Mammary epithelial cell (primary cell): ENCODE measurements at regions of chr7 and their contacts with region 1.

Region 1: DNA sequence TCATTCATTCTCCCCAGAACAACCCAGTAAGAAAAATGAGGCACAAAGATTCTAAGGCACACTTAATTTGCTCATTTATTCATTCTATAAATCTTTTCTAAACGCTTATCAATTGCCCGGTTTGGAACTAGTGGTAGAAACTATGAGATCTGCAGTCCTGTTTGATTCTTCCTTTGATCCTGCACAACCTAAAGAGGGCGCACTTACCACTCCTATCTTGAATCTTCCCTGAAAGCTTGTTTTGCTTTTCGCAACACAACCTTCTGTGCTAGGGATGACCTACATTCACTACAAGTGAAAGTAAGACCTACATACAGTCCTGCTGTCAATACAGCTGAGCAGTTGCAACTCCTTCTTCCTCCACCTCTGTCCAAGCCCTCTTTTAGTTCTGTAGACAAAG is 12.6 kb upstream of the ARL4A start:
- DNase-seq: peak; percentile 30
- H3K4me3 ChIP-seq: no peak overlapping the region
- H3K27ac ChIP-seq: no peak overlapping the region
- H3K4me1 ChIP-seq: no peaks in the 10 kb centered on the region
- H3K27me3 ChIP-seq: no peaks in the 10 kb centered on the region
- CTCF ChIP-seq: peak; percentile 54 to 63

Region 2: DNA sequence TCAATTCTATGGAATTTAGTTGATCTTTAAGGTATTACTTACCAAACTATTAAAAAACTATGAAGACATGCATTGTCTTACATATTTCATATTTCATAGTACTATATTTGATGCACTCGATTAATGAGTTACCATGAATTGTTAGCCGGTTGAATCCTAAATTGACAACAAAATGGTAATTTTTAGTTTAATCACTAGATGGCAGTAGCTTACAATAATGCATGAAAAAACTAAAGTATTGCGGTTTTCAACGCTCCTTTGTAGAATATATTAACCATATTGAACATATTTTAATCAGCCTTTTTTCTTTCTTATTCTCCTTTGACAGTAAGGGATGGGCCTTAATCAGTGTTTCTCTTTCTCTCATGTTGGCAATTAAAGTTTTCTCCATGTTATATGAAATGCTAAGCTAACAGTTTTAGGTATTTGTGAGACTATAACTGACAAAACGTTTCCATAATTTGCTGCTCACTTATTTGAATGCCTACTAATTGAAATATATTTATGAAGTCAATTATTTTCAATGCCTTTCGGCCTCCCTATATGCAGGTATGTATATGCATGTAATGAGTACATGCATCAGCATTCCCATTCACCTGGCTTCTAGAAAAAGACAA is 35.9 kb before region 1 on chr7:
- CTCF ChIA-PET with region 1: no interaction called
- dilution Hi-C with region 1: no loop called
- in situ Hi-C with region 1: no loop called
- intact Hi-C with region 1: loop called (anchors 1 kb)
- DNase-seq: peak; percentile 32
- H3K4me3 ChIP-seq: no peak overlapping the region
- H3K27ac ChIP-seq: no peak overlapping the region
- H3K4me1 ChIP-seq: no peaks in the 10 kb centered on the region
- H3K27me3 ChIP-seq: no peaks in the 10 kb centered on the region
- CTCF ChIP-seq: peak; percentile 56 to 61